ENCODE measurements at regions of chr4 and their contacts with region 1.

Region 1: GRCh38 chr4:139734875-139735380 is 69.3 kb downstream of the MGST2 start:
- DNase-seq: peak; percentile 90 to 97 (median 93)
- H3K4me3 ChIP-seq: peak overlapping the region; percentile 13 to 51 (median 18)
- H3K27ac ChIP-seq: peak overlapping the region; percentile 75 to 96 (median 86)
- H3K4me1 ChIP-seq: peaks cover 19 to 53% of the 10 kb centered on the region in 2 donors
- H3K27me3 ChIP-seq: no peaks in the 10 kb centered on the region
- CTCF ChIP-seq: peak; percentile 31 to 91 (median 78)
- POLR2A ChIP-seq: peak in 1 of 2 donors; percentile 58

Region 2: DNA sequence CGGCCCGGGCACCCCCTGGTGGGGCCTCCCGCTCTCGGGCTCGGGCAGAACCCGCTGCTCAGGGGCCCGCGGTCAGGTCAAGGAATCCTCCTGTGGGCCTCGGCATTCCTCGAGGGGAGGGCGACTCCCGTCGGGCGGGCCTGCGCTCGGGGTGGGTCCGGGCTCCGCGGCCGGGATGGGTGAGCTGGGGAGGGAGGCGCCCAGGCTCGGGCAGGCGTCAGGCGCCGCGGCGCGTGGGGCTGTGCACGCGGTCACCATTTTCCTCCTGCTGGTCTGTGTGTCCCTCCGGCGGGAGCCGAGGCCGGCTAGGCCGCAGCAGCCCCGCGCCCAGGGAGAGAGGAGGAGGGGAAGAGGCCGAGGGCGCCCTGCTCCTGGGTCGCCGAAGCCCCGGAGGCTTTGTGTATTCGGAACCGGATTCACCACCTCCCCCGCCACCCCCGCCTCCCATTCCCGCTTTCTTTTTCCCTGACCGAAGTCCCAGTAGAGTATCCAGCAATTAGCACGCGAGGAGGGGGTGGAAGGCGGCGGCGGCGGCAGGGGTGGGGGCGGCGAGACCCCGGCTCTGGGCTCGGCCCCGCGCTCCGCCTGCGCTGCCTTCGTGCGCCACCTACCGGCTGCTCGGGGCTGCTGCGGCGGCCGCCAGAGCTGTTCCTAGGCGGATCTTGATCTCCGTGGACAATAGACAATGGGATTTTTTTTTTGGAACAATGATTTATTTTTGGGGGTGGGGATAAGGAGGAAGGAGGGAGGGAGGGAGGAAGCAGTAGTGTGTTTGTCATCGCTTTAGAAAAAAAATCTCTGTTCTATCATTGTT is 518.0 kb after region 1 on chr4:
- intact Hi-C with region 1: loop called (anchors 10 kb)
- DNase-seq: peak; percentile 77 to 88 (median 79)
- H3K4me3 ChIP-seq: peak overlapping the region in 2 of 4 donors; percentile 54 to 66
- H3K27ac ChIP-seq: peak overlapping the region; percentile 53 to 95 (median 92)
- H3K4me1 ChIP-seq: peaks cover 5 to 29% of the 10 kb centered on the region in 2 donors
- H3K27me3 ChIP-seq: no peaks in the 10 kb centered on the region
- CTCF ChIP-seq: peak; percentile 65 to 97 (median 80)
- POLR2A ChIP-seq: peak in 1 of 2 donors; percentile 48